ENCODE measurements at regions of chr12 and their contacts with region 1.

Region 1: DNA sequence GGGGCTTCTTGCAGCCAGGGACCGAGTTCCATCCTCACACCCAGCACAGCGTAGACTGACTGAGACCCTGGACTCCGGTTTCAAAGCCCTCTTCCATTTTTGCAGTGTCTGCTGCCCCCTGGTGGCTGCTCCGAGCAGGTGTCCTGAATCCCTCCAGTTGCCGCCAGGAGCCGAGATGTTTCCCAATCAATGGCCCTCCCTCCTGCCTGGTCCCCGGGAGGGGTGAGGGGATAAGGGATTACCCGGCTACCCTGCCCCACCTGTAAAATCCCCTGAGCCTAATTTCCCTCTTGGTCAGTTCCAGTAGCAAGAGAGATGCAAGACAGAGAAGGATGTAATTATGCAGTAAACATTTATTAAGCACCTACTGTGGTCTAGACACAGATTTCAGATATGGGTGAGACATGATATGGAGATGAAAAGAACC is 55.0 kb downstream of the PHETA1 start:
- DNase-seq: peak; percentile 37 to 89 (median 73)
- ATAC-seq: peak; percentile 67 to 88 (median 86)
- H3K4me3 ChIP-seq: no peak overlapping the region
- H3K27ac ChIP-seq: no peak overlapping the region
- H3K4me1 ChIP-seq: no peaks in the 10 kb centered on the region
- H3K27me3 ChIP-seq: no peaks in the 10 kb centered on the region
- CTCF ChIP-seq: peak; percentile 87 to 93 (median 90)

Region 2: GRCh38 chr12:110721570-110721969 is 592.3 kb before region 1 on chr12:
- intact Hi-C with region 1: no loop called
- DNase-seq: no peak
- ATAC-seq: no peak
- H3K4me3 ChIP-seq: no peak overlapping the region
- H3K27ac ChIP-seq: no peak overlapping the region
- H3K4me1 ChIP-seq: no peaks in the 10 kb centered on the region
- H3K27me3 ChIP-seq: no peaks in the 10 kb centered on the region
- CTCF ChIP-seq: no peak

Region 3: DNA sequence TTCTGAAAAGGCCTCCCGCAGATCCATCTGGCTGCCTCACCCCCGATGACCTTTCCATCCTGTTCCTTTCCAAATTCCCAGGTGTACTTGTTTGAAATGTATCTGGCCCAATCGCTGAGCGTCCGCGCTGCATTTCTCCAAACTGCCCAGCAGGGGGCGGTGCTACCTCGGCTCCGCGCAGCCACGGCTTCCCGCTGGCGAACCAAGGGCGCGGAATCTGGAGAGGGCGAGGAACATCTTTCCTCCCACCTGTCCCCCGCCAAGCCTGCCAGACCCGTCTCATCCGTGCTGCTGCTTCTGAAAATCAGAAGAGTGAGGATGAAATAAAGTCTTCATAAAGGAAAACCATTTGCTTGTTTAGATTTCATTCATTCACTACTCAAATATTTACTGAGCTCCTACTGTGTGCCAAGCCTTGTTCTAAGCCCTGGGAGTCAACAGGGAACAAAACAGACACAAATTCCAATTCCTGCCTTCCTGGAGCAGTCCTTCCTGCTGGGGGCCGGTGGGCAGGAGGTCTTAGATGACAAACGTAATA is 376.7 kb before region 1 on chr12:
- intact Hi-C with region 1: loop called (anchors 5 to 10 kb)
- DNase-seq: peak; percentile 19 to 86 (median 54)
- ATAC-seq: peak; percentile 61 to 92 (median 84)
- H3K4me3 ChIP-seq: no peak overlapping the region
- H3K27ac ChIP-seq: no peak overlapping the region
- H3K4me1 ChIP-seq: peaks cover 0 to 3% (median 0%) of the 10 kb centered on the region in 3 donors
- H3K27me3 ChIP-seq: no peaks in the 10 kb centered on the region
- CTCF ChIP-seq: peak; percentile 85 to 93 (median 89)

Region 4: GRCh38 chr12:111344254-111344875 is 30.5 kb after region 1 on chr12:
- intact Hi-C with region 1: no loop called
- DNase-seq: no peak
- ATAC-seq: no peak
- H3K4me3 ChIP-seq: no peak overlapping the region
- H3K27ac ChIP-seq: no peak overlapping the region
- H3K4me1 ChIP-seq: no peaks in the 10 kb centered on the region
- H3K27me3 ChIP-seq: no peaks in the 10 kb centered on the region
- CTCF ChIP-seq: no peak

Region 5: DNA sequence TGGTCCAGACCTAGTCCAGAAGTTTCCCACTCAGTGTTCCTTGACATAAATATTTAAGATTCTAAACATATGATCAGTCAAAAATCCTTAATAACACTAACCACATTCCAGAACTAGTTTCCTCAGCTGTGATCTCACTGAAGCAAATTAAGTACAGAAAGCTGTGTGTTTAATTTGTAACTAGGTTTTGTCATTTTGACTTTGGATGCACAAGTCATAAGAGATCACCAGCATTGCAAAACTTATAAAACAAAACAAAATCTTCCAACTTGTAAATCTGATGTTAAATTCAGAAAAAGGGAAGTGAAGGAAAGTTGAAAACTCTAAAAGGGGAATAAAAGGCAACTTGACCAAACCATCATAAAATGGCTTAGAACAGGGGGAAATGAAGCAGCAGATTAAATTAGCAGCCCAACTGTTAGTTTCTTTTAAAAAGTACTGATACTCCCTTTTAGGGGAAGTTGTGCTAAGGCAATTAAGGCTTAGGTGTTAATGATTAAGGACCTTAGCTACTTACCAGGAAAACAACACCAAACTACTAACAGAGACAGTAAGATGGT is 148.4 kb after region 1 on chr12:
- intact Hi-C with region 1: no loop called
- DNase-seq: no peak
- ATAC-seq: peak in 1 of 4 donors; percentile 26
- H3K4me3 ChIP-seq: no peak overlapping the region
- H3K27ac ChIP-seq: no peak overlapping the region
- H3K4me1 ChIP-seq: peaks cover 0 to 17% (median 0%) of the 10 kb centered on the region in 3 donors
- H3K27me3 ChIP-seq: no peaks in the 10 kb centered on the region
- CTCF ChIP-seq: no peak